Activated CD4-positive, alpha-beta memory T cell treated with anti-CD3 and anti-CD28 coated beads, Interleukin-2, amount 10 ng/mL, durations not matched to agents 7 days and 5 days (primary cell): ENCODE measurements at regions of chr13 and their contacts with region 1.

Region 1: GRCh38 chr13:48400850-48401291 is 12.0 kb downstream of the LPAR6 start:
- DNase-seq: no peak
- H3K4me3 Mint-ChIP-seq: peak overlapping the region; percentile 38
- H3K27ac Mint-ChIP-seq: peak overlapping the region; percentile 74
- H3K4me1 Mint-ChIP-seq: peaks cover 61% of the 10 kb centered on the region
- H3K27me3 Mint-ChIP-seq: no peaks in the 10 kb centered on the region

Region 2: DNA sequence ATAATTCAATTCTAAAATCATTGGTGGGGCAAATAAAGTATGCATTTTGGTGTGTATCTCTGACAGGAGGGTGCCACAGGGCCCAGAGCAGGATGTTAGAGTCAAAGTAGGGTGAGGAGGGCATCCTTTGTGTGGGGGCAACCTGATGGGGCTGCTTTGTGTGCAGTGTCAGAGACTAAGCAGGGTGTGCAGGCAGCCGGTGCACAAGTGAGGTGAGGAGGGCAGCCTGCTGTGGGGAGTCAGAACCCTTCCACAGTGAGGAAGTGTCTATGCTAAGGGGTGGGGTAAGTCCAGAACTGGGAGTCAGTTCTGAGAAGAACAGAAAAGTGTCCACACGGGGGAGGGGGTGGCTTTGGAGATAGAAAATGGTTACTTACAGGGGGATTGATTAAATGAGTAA is 56.6 kb before region 1 on chr13:
- CTCF ChIA-PET with region 1: no interaction called
- POLR2A ChIA-PET with region 1: no interaction called
- DNase-seq: no peak
- H3K4me3 Mint-ChIP-seq: no peak overlapping the region
- H3K27ac Mint-ChIP-seq: no peak overlapping the region
- H3K4me1 Mint-ChIP-seq: peaks cover 21% of the 10 kb centered on the region
- H3K27me3 Mint-ChIP-seq: no peaks in the 10 kb centered on the region

Region 3: GRCh38 chr13:48380581-48380980 is 20.3 kb before region 1 on chr13:
- CTCF ChIA-PET with region 1: no interaction called
- POLR2A ChIA-PET with region 1: no interaction called
- DNase-seq: no peak
- H3K4me3 Mint-ChIP-seq: no peak overlapping the region
- H3K27ac Mint-ChIP-seq: no peak overlapping the region
- H3K4me1 Mint-ChIP-seq: peaks cover 2% of the 10 kb centered on the region
- H3K27me3 Mint-ChIP-seq: no peaks in the 10 kb centered on the region

Region 4: GRCh38 chr13:48412881-48413351 is 12.0 kb after region 1 on chr13 and contains the start of gene LPAR6:
- CTCF ChIA-PET with region 1: interaction called, 3 read pairs
- POLR2A ChIA-PET with region 1: interaction called, 41 read pairs
- DNase-seq: peak; percentile 26
- H3K4me3 Mint-ChIP-seq: peak within 1 kb of the TSS; percentile 99
- H3K27ac Mint-ChIP-seq: peak within 1 kb of the TSS; percentile 96
- H3K4me1 Mint-ChIP-seq: peaks cover 42% of the 10 kb centered on the region
- H3K27me3 Mint-ChIP-seq: no peaks in the 10 kb centered on the region
- total RNA-seq, gene LPAR6: 96.8 to 100 TPM

Region 5: GRCh38 chr13:48749699-48750473 is 349.0 kb after region 1 on chr13:
- CTCF ChIA-PET with region 1: no interaction called
- POLR2A ChIA-PET with region 1: no interaction called
- DNase-seq: peak; percentile 74
- H3K4me3 Mint-ChIP-seq: no peak overlapping the region
- H3K27ac Mint-ChIP-seq: peak overlapping the region; percentile 16
- H3K4me1 Mint-ChIP-seq: peaks cover 18% of the 10 kb centered on the region
- H3K27me3 Mint-ChIP-seq: no peaks in the 10 kb centered on the region